ENCODE measurements at regions of chr19 and their contacts with region 1.

Region 1: DNA sequence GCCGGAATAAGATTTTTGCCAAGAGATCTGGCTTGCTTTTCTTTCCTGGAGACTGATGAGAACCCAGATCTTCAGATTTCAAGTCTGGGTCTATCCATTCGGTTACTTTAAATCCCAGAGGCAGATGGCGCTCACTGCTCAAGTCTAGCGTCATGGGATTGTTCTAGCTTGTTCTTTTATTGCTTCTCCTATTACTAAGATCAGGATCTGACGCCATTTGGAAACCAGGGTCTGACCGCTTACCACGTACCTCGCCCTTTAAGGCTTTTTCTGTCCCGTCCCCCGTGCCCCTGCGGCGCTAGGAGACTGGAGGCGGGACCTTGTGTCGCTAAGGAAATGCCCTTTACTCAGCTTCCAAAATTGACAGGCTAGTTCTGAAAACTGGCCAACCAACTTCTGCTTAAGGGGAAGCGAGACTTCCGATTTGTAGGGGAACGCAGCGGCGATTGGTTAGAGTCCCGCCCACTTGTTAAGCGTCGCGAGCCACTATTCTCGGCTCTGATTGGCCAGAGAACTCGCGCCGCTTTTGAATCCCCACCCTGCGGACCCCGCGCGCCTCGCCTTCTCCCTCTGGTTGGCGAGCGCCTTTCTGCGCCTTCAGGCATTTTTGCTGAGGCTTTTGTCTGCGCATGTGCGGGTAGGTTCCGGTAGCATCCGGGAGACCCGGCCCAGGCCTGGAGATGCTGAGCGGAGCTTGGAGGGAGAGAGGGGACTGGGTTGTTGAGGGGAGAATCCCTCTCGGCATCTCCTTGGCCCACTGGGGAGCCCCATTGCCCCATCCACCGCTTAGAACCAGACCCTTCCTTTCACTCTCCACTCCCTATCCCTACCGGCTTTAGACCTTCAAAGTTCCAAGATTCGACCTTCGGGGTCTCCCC is 3.8 kb upstream of the C19orf84 start:
- DNase-seq: peak; percentile 99
- ATAC-seq: peak; percentile 94
- H3K4me3 Mint-ChIP-seq: peak overlapping the region; percentile 95
- H3K27ac Mint-ChIP-seq: peak overlapping the region; percentile 96
- H3K4me1 Mint-ChIP-seq: peaks cover 61% of the 10 kb centered on the region
- H3K27me3 Mint-ChIP-seq: no peaks in the 10 kb centered on the region

Region 2: DNA sequence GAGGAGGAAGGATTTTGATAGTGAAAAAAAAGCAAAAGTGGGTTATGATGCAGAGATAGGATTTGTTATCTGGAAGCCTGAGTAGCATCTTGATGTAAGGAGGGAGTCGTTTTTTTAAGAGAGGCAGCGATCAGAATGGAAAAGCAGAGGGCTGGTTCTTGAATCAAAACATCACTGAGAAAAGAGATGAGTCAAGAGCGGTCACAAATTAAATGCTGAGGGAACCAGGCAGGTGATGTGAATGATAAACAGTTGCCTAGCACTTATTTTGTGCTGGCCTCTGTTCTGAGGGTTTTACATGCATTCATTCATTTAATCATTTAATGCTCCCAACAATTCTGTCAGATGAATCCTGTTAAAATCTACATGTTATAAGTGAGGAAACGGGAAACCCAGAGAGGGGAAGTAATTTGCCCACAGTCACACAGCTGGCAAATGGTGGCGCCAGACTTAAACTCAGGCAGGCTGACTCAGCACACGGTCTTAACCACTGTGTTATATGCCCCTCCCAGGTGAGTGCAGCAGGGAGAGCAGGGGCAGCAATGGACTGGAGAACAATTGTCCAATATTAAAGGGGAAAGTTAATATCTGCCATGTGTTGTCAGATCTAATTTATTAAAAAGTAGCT is 121.9 kb before region 1 on chr19:
- CTCF ChIA-PET with region 1: no interaction called
- POLR2A ChIA-PET with region 1: no interaction called
- DNase-seq: peak; percentile 42
- ATAC-seq: peak; percentile 49
- H3K4me3 Mint-ChIP-seq: no peak overlapping the region
- H3K27ac Mint-ChIP-seq: no peak overlapping the region
- H3K4me1 Mint-ChIP-seq: peaks cover 15% of the 10 kb centered on the region
- H3K27me3 Mint-ChIP-seq: peaks cover 28% of the 10 kb centered on the region

Region 3: DNA sequence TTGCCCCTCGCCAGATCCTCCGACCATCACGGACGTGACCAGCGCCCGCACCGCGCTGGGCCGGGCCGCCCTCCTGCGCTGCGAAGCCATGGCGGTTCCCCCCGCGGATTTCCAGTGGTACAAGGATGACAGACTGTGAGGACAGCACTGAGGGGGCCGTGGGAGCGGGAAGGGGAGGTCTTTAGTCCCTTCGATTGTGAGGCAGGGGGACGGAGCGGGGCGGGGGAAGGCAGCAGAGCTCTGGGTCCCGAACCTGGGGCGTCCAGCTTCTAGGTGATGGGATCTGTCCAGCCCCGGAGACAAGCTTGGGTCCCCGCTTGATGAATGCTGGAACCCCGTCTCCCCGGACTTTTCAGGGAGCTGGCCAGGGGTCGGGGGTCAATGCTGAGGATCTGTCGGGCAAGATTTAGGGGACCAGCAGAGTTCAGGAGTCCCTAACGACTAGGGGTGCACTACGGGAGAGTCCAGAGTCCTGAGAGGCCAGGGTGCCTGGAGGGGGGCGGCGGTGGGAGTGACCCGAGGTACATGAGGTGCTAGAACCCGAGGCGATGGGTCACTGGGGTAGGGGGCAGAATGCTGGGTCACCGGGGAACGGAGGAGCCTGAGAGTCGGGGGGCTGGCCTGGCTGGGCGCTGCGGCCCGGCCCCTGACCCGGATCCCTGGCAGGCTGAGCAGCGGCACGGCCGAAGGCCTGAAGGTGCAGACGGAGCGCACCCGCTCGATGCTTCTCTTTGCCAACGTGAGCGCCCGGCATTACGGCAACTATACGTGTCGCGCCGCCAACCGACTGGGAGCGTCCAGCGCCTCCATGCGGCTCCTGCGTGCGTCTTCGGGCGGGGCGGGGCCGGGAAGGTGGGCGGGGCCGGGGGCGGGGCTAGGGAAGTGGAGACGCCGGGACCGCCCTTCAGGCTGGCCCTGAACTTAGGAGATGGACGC is 66.9 kb before region 1 on chr19:
- CTCF ChIA-PET with region 1: no interaction called
- POLR2A ChIA-PET with region 1: no interaction called
- DNase-seq: peak; percentile 75
- ATAC-seq: peak; percentile 79
- H3K4me3 Mint-ChIP-seq: peak overlapping the region; percentile 59
- H3K27ac Mint-ChIP-seq: no peak overlapping the region
- H3K4me1 Mint-ChIP-seq: peaks cover 20% of the 10 kb centered on the region
- H3K27me3 Mint-ChIP-seq: peaks cover 41% of the 10 kb centered on the region

Region 4: DNA sequence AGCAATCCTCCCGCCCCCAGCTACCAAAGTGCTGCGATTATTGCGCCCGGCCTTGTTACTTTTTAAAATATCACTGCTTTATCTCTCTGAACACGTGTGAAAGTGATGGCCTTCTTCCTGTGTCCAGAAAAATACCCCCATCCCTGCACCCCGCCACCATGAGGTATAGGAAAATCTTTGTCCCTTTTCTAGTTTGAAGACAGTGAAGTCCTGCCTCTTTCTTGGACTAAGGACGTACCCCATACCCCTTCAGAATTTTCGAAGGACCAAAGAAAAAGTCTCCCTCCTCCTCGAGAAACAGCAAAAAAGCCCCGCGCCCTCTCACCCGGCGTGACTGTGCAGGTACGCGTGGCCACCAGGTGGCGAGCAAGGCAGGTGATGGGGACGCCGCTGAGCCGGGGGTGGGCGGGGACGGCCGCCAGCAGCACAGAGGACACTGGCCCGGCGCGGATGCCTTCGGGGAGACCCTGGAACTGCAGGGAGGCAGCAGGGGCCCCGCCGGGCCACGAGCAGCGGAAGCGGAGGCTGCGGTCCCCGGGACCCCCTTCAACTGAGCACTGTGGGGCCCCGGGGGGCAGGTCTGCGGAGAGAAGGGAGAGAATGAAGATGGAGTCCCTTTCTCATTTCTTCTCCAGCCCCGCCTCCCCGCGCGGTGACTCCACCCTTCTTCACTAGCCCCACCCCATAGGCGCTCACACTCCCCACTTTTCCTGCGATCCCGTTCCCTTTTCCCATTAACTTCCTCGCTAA is 55.5 kb before region 1 on chr19:
- CTCF ChIA-PET with region 1: interaction called, 9 read pairs
- POLR2A ChIA-PET with region 1: interaction called, 14 read pairs
- DNase-seq: peak; percentile 92
- ATAC-seq: peak; percentile 81
- H3K4me3 Mint-ChIP-seq: peak overlapping the region; percentile 86
- H3K27ac Mint-ChIP-seq: peak overlapping the region; percentile 78
- H3K4me1 Mint-ChIP-seq: peaks cover 20% of the 10 kb centered on the region
- H3K27me3 Mint-ChIP-seq: peaks cover 6% of the 10 kb centered on the region

Region 5: GRCh38 chr19:51367565-51368365 is 26.4 kb before region 1 on chr19:
- CTCF ChIA-PET with region 1: interaction called, 39 read pairs
- POLR2A ChIA-PET with region 1: interaction called, 68 read pairs
- DNase-seq: peak; percentile 99
- ATAC-seq: peak; percentile 75
- H3K4me3 Mint-ChIP-seq: peak overlapping the region; percentile 96
- H3K27ac Mint-ChIP-seq: peak overlapping the region; percentile 94
- H3K4me1 Mint-ChIP-seq: peaks cover 77% of the 10 kb centered on the region
- H3K27me3 Mint-ChIP-seq: no peaks in the 10 kb centered on the region

Region 6: GRCh38 chr19:51372649-51373504 is 21.3 kb before region 1 on chr19 and contains the start of gene NKG7:
- CTCF ChIA-PET with region 1: interaction called, 39 read pairs
- POLR2A ChIA-PET with region 1: interaction called, 68 read pairs
- DNase-seq: peak; percentile 95
- ATAC-seq: peak; percentile 81
- H3K4me3 Mint-ChIP-seq: peak within 1 kb of the TSS; percentile 96
- H3K27ac Mint-ChIP-seq: peak within 1 kb of the TSS; percentile 100
- H3K4me1 Mint-ChIP-seq: peaks cover 83% of the 10 kb centered on the region
- H3K27me3 Mint-ChIP-seq: no peaks in the 10 kb centered on the region
- total RNA-seq, gene NKG7: 401 to 410 TPM

Region 7: DNA sequence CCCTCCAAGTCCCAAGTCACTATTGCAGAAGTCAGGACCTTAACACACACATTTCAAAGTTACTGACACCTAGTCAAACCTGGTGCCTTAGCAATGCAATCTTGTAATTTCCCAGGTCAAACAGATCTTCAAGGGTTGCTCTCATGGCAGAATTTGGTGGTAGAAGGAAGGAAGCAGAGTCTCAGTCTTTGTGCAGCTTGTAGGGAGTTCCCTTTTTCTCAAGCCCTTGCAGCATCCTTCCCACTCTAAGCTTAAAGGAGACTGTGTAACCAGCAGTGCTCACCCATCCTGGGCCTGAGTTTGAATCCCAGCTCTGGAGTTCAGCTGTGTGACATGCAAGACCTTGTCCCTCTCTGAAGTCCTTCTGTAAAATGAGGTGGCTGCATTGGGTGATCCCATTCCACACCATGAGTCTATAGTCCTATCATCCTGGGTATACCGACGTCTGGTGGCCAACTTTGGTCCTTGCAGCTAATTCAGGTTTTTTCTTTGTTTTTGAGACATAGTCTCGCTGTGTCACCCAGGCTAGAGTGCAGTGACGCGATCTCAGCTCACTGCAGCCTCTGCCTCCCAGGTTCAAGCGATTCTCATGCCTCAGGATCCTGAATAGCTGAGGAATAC is 13.4 kb after region 1 on chr19:
- CTCF ChIA-PET with region 1: interaction called, 28 read pairs
- POLR2A ChIA-PET with region 1: no interaction called
- DNase-seq: peak; percentile 53
- ATAC-seq: peak; percentile 75
- H3K4me3 Mint-ChIP-seq: no peak overlapping the region
- H3K27ac Mint-ChIP-seq: no peak overlapping the region
- H3K4me1 Mint-ChIP-seq: peaks cover 8% of the 10 kb centered on the region
- H3K27me3 Mint-ChIP-seq: peaks cover 3% of the 10 kb centered on the region

Region 8: GRCh38 chr19:51422053-51422448 is 27.9 kb after region 1 on chr19:
- CTCF ChIA-PET with region 1: interaction called, 35 read pairs
- POLR2A ChIA-PET with region 1: interaction called, 11 read pairs
- DNase-seq: peak; percentile 91
- ATAC-seq: peak; percentile 81
- H3K4me3 Mint-ChIP-seq: no peak overlapping the region
- H3K27ac Mint-ChIP-seq: no peak overlapping the region
- H3K4me1 Mint-ChIP-seq: peaks cover 17% of the 10 kb centered on the region
- H3K27me3 Mint-ChIP-seq: peaks cover 21% of the 10 kb centered on the region

Region 9: DNA sequence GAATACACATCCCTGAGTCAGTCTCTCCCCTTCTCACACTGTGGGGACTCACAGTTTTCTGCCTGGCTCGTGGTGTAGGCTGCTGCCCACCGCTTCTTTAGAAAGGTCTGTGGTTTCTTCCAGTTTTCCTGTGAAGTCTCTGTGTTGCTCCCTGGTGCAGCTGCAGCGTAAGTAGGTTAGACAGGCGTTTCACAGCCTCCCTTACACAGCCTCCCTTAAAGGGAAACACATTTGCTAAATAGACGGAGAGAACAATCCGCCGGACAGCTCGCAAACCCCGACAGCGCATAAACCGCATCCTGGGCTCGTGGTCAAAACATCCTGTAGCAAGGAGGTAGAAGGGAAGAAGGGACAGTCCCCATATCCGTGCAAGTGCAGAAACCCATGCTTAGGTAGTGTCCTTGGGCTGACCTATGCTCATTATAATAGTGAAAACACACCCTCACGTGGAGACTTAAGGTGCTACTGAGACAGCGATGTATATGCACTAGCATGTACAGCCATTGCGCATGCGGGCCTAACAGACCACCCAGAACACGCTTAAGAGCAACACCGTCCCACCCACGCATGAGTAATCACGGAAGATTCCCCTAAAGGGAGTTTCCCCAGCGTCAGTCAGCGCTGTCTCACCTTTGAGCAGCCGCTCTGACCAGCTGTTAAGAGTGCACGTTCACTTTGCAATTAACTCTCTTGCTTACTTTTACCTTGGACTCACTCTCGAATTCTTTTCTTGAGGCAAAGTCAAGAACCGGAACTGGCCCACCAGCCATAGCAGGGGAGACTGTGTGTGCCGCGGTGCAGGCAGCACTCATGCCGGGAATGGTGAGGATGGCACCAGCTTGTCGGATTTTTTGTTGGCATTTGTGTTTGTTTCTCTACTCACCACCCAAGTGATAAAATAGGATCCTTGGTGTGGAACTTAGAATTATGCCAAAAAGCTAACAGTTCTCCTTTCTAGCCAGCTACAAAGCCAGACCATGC is 47.5 kb after region 1 on chr19:
- CTCF ChIA-PET with region 1: interaction called, 31 read pairs
- POLR2A ChIA-PET with region 1: interaction called, 4 read pairs
- DNase-seq: peak; percentile 97
- ATAC-seq: peak; percentile 92
- H3K4me3 Mint-ChIP-seq: peak overlapping the region; percentile 71
- H3K27ac Mint-ChIP-seq: peak overlapping the region; percentile 74
- H3K4me1 Mint-ChIP-seq: peaks cover 49% of the 10 kb centered on the region
- H3K27me3 Mint-ChIP-seq: peaks cover 38% of the 10 kb centered on the region

Region 10: DNA sequence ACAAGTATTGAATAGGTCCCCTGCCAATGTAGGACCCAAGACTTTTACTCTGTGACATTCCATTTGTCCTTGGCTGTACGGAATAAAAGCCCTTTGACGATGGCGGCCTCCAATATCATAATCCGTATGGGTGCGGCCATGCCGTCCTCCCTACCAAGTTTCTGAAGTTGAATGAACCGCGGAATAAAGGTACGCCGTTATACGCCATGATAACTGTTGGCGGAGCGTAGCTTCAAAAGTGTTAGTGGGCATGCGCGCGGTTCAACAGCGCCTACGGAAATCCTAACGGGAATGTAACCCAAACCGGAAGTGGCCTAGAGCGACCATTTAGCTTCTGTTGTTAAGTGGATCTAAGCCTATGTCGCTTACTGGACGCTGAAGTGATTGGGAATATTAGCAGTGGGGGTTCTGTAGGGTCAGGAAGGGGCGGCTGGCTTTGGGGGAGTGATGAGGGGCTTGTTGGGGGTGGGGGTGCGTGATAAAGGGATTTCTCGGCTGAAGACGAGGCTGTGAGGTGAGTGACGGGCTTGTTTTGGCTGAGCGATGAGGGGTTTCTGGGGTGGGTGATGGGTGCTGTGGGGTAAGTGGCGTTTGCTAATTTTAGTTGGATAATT is 176.9 kb after region 1 on chr19 and contains the start of gene ZNF175:
- CTCF ChIA-PET with region 1: no interaction called
- POLR2A ChIA-PET with region 1: no interaction called
- DNase-seq: peak; percentile 85
- ATAC-seq: peak; percentile 94
- H3K4me3 Mint-ChIP-seq: peak within 1 kb of the TSS; percentile 97
- H3K27ac Mint-ChIP-seq: peak within 1 kb of the TSS; percentile 76
- H3K4me1 Mint-ChIP-seq: peaks cover 25% of the 10 kb centered on the region
- H3K27me3 Mint-ChIP-seq: peaks cover 10% of the 10 kb centered on the region
- total RNA-seq, gene ZNF175: 8.4 to 9.7 TPM

Measured in activated CD8-positive, alpha-beta T cell treated with anti-CD3 and anti-CD28 coated beads, Interleukin-2, amount 10 ng/mL, durations not matched to agents 7 days and 5 days (primary cell).